Left cardiac atrium (tissue), 4 donors: ENCODE measurements at regions of chr20 and their contacts with region 1.

Region 1: GRCh38 chr20:50635667-50636503 is 55.5 kb downstream of the RIPOR3 start:
- DNase-seq: peak; percentile 75
- ATAC-seq: peak; percentile 65 to 79

Region 2: GRCh38 chr20:50731055-50731871 is 95.4 kb after region 1 on chr20 and contains the start of gene PARD6B:
- intact Hi-C with region 1: loop called in 1 of 2 experiments (anchors 10 kb)
- DNase-seq: peak; percentile 96
- ATAC-seq: peak; percentile 95 to 97
- total RNA-seq, gene PARD6B: 3.2 to 4.6 TPM